SK-N-SH (cell line): ENCODE measurements at regions of chr2 and their contacts with region 1.

Region 1: GRCh38 chr2:45650851-45651414 is 542 bp upstream of the PRKCE start:
- DNase-seq: peak; percentile 96
- H3K4me3 ChIP-seq: peak overlapping the region; percentile 87 to 88
- H3K27ac ChIP-seq: peak overlapping the region; percentile 81 to 88
- H3K4me1 ChIP-seq: peaks cover 0 to 30% of the 10 kb centered on the region in 2 experiments; a peak in 2 of 4 replicates
- H3K27me3 ChIP-seq: no peaks in the 10 kb centered on the region
- CTCF ChIP-seq: peak; percentile 55
- EP300 ChIP-seq: peak; percentile 39 to 51; a peak in 3 of 4 replicates
- RAD21 ChIP-seq: peak; percentile 57

Region 2: DNA sequence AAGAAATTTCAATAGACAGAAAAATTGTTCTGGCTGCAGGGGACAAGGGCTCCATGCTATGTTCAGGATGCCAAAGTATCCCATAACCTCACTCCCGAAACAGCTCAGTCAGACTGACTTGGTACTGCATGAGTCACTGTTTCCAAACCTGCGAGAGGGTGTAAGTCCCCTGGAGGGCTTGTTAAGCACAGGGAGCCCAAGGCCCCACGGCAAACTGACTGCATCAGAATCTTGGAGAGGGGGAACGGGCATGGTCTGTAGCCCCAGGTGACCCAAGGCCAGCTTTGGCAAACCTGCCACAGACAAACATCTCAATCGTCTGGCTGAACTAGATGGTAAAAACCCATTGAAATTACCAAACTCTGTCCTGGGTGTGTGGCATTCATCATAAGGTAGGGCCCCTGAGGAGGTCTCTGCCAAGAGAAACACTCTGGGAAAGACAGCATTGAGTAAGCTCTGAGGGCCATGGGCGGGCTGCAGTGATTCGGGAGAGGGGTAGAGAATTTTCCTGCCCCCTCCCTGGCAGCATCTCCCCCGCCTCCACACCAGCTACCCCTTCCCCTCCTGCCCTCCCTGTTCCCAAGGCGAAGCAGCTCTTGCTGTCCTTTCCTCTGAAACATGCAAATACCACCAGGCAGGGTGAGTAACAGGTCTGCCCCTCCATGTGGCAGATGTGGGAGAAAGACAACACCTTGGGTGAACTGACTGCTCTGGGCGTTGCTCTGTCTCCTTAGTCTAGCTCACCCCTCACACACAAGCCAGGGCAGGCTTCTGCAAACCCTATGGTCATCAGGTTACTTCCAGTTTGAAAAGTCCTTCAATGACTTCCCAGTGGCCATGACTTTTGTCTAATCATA is 366.9 kb before region 1 on chr2:
- CTCF ChIA-PET with region 1: no interaction called
- POLR2A ChIA-PET with region 1: no interaction called
- DNase-seq: no peak
- H3K4me3 ChIP-seq: no peak overlapping the region
- H3K27ac ChIP-seq: peak overlapping the region in 1 of 2 experiments; percentile 77; a peak in 2 of 4 replicates
- H3K4me1 ChIP-seq: peaks cover 5 to 31% of the 10 kb centered on the region in 2 experiments; a peak in 2 of 4 replicates
- H3K27me3 ChIP-seq: no peaks in the 10 kb centered on the region
- CTCF ChIP-seq: no peak
- EP300 ChIP-seq: no peak; a peak in 1 of 4 replicates
- RAD21 ChIP-seq: no peak

Region 3: DNA sequence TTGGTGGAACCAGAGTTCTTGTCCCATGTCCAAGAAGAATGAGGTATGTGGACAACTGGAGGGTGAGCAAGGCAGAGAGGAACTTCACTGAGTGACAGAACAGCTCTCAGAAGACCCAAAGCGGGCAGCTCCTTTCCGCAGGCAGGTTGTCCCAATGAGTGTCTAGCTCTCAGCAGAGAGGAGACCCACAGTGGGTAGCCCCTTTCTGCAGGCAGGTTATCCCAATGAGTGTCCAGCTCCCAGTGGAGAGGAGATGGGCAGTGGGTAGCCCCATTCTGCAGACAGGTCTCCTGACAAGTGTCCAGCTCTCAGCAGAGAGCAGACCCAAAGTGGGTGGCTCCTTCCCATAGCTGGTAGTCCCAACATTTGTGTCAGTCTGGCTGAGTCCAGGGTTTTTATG is 109.5 kb before region 1 on chr2:
- CTCF ChIA-PET with region 1: no interaction called
- POLR2A ChIA-PET with region 1: no interaction called
- DNase-seq: no peak
- H3K4me3 ChIP-seq: peak overlapping the region in 1 of 2 experiments; percentile 22; a peak in 1 of 4 replicates
- H3K27ac ChIP-seq: no peak overlapping the region
- H3K4me1 ChIP-seq: no peaks in the 10 kb centered on the region
- H3K27me3 ChIP-seq: no peaks in the 10 kb centered on the region
- CTCF ChIP-seq: no peak
- EP300 ChIP-seq: no peak
- RAD21 ChIP-seq: no peak

Region 4: DNA sequence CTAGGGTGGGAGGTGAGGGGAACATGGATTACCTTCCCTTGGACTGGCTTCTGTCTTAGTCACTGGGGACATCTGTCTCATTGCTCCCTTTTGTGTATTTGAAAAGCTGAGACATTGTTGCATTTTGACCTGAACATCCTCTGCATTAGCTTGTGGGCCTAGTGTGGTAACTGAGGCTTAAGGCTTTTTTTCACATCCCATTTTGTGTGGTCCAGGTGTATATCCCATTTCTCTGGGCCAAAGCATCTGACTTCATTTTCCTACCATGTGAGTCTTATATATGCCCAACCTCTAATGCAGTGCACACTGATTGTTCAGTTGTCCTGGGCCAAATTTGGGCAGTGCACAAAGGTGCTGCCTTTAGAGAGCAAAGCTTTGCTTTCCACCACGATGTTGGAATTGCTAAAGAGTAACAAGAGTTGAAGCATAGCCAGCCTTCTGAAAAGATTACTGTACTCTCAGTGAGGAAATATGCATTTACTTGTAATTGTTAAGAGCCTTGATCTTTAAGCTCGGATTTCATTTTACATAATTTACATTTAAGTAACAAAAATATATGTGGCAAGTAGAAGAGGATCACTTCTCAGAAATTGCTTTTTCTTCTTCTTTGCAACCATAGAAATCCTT is 13.8 kb after region 1 on chr2:
- CTCF ChIA-PET with region 1: interaction called, 25 read pairs
- POLR2A ChIA-PET with region 1: no interaction called
- DNase-seq: no peak
- H3K4me3 ChIP-seq: no peak overlapping the region
- H3K27ac ChIP-seq: no peak overlapping the region
- H3K4me1 ChIP-seq: peaks cover 7 to 14% of the 10 kb centered on the region in 2 experiments; a peak in 1 of 4 replicates
- H3K27me3 ChIP-seq: no peaks in the 10 kb centered on the region
- CTCF ChIP-seq: no peak
- EP300 ChIP-seq: no peak
- RAD21 ChIP-seq: no peak

Region 5: GRCh38 chr2:45741161-45741850 is 90.4 kb after region 1 on chr2:
- CTCF ChIA-PET with region 1: interaction called, 14 read pairs
- POLR2A ChIA-PET with region 1: interaction called, 3 read pairs
- DNase-seq: no peak
- H3K4me3 ChIP-seq: no peak overlapping the region
- H3K27ac ChIP-seq: peak overlapping the region in 1 of 2 experiments; percentile 8; a peak in 1 of 4 replicates
- H3K4me1 ChIP-seq: peaks cover 3 to 32% of the 10 kb centered on the region in 2 experiments; a peak in 1 of 4 replicates
- H3K27me3 ChIP-seq: no peaks in the 10 kb centered on the region
- CTCF ChIP-seq: no peak
- EP300 ChIP-seq: no peak
- RAD21 ChIP-seq: no peak

Region 6: GRCh38 chr2:45771261-45771660 is 120.3 kb after region 1 on chr2:
- CTCF ChIA-PET with region 1: interaction called, 13 read pairs
- POLR2A ChIA-PET with region 1: interaction called, 3 read pairs
- DNase-seq: peak; percentile 62
- H3K4me3 ChIP-seq: no peak overlapping the region
- H3K27ac ChIP-seq: no peak overlapping the region; a peak in 1 of 4 replicates
- H3K4me1 ChIP-seq: peaks cover 0 to 53% of the 10 kb centered on the region in 2 experiments; a peak in 2 of 4 replicates
- H3K27me3 ChIP-seq: no peaks in the 10 kb centered on the region
- CTCF ChIP-seq: no peak
- EP300 ChIP-seq: no peak
- RAD21 ChIP-seq: peak; percentile 48

Region 7: DNA sequence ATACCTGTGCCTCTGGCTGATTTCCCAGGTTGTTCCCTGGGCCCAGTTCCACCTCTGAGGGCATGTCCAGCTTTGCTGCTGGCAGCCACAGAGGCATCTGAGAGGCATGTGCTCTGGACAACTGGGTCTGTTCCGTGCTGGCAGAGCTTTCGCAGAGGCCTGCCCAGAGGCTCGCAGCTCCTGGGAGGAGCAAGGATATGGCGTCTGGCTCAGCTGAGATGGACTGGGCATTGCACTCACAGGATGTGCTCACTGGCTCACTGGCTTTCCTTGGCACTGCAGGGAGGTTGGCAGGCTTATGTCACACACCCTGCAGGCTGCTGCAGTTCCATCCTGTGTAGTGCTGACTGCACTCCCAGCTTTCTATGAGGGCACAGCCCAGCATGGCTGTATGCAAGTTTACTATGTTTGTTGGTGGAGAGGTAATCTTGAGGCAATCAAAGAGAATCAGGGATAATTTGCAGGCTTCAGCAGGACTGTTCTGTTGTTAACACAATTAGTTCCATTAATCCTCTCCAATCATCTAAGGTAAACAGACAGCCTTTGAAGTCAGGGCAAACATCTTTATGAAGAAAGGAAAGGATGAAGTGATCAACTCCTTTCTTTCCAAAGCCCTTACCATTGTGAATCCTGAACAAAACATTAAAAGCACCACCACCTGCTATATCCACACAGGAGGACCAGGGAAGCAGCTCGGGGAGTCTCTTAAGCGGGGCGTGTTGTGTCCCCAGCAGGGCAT is 173.0 kb after region 1 on chr2:
- CTCF ChIA-PET with region 1: interaction called, 14 read pairs
- POLR2A ChIA-PET with region 1: interaction called, 3 read pairs
- DNase-seq: peak; percentile 89
- H3K4me3 ChIP-seq: no peak overlapping the region
- H3K27ac ChIP-seq: peak overlapping the region in 1 of 2 experiments; percentile 96; a peak in 2 of 4 replicates
- H3K4me1 ChIP-seq: peaks cover 12 to 43% of the 10 kb centered on the region in 2 experiments; a peak in 2 of 4 replicates
- H3K27me3 ChIP-seq: no peaks in the 10 kb centered on the region
- CTCF ChIP-seq: no peak
- EP300 ChIP-seq: peak in 1 of 2 experiments; percentile 63; a peak in 2 of 4 replicates
- RAD21 ChIP-seq: peak; percentile 48